ENCODE measurements at regions of chr7 and their contacts with region 1.

Region 1: GRCh38 chr7:85041605-85042216 is 145.1 kb downstream of the SEMA3D start:
- H3K4me3 Mint-ChIP-seq: no peak overlapping the region
- H3K27ac Mint-ChIP-seq: no peak overlapping the region
- H3K4me1 Mint-ChIP-seq: no peaks in the 10 kb centered on the region
- H3K27me3 Mint-ChIP-seq: no peaks in the 10 kb centered on the region

Region 2: DNA sequence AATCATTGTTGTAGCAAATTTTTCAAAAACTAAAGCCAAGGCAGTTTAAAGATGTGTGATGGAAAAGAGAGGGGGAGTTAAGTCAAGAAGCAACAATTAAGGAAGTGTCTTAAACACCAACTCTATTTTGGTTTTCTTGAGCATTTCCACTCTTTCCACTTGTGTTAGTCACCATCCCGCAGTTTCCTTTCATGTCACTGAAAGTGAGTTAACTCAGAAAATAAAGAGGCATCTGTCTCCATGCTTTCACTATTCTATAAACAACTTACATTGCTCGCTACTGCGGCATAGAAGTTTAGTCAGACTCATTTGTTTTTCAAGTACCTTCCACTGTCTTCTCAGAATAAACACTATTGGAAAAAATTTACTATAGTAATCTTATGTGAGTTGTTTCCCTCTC is 430.0 kb after region 1 on chr7:
- intact Hi-C with region 1: loop called (anchors 10 kb)
- H3K4me3 Mint-ChIP-seq: no peak overlapping the region
- H3K27ac Mint-ChIP-seq: no peak overlapping the region
- H3K4me1 Mint-ChIP-seq: peaks cover 16% of the 10 kb centered on the region
- H3K27me3 Mint-ChIP-seq: no peaks in the 10 kb centered on the region

Region 3: DNA sequence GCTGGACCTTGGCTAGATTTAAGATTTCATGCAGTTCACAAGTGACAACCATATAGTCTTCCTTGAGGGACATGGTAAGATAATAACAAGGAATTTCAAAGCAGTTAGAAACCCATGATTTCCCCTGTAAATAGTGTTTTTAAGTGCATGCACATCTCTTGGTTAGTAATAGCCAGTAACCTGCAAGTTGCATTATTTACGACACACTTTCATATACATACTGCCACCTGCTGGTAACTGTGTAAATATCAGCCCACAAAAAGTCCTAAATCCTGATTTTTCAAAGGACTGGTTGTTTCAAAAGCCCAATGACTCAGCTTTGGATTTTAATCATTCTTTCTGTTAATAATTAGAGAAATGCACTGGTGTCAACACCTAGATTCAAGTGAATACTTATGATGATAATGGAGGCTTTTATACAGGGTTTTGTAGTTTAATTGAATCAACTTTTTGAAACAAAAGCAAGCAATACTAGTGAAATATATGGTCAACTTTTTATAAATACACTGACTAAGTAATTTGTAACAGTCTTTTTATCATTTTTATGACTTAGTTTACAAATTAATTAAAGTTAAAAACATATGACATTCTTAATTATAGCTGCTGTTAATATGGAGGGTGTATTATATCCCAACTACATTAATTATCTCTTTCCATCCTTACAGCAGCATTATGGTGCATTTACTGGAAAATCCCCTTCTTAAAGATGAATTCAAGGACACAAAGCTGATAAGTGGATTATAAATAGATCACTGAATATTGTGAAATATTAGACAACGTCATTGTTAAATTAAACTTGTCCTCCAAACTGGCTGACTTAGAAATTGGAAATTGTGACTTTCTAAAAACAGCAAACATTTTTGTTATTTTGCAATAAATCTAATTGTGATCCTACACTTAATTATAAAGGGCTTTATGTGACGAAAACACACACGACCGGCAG is 512.8 kb after region 1 on chr7:
- intact Hi-C with region 1: loop called (anchors 2 kb)
- H3K4me3 Mint-ChIP-seq: no peak overlapping the region
- H3K27ac Mint-ChIP-seq: no peak overlapping the region
- H3K4me1 Mint-ChIP-seq: peaks cover 7% of the 10 kb centered on the region
- H3K27me3 Mint-ChIP-seq: no peaks in the 10 kb centered on the region

Region 4: GRCh38 chr7:85750454-85750949 is 708.8 kb after region 1 on chr7:
- intact Hi-C with region 1: loop called (anchors 1 kb)
- H3K4me3 Mint-ChIP-seq: no peak overlapping the region
- H3K27ac Mint-ChIP-seq: no peak overlapping the region
- H3K4me1 Mint-ChIP-seq: no peaks in the 10 kb centered on the region
- H3K27me3 Mint-ChIP-seq: no peaks in the 10 kb centered on the region

Region 5: GRCh38 chr7:85829817-85830432 is 788.2 kb after region 1 on chr7:
- intact Hi-C with region 1: loop called (anchors 5 kb)
- H3K4me3 Mint-ChIP-seq: no peak overlapping the region
- H3K27ac Mint-ChIP-seq: no peak overlapping the region
- H3K4me1 Mint-ChIP-seq: no peaks in the 10 kb centered on the region
- H3K27me3 Mint-ChIP-seq: no peaks in the 10 kb centered on the region

Region 6: DNA sequence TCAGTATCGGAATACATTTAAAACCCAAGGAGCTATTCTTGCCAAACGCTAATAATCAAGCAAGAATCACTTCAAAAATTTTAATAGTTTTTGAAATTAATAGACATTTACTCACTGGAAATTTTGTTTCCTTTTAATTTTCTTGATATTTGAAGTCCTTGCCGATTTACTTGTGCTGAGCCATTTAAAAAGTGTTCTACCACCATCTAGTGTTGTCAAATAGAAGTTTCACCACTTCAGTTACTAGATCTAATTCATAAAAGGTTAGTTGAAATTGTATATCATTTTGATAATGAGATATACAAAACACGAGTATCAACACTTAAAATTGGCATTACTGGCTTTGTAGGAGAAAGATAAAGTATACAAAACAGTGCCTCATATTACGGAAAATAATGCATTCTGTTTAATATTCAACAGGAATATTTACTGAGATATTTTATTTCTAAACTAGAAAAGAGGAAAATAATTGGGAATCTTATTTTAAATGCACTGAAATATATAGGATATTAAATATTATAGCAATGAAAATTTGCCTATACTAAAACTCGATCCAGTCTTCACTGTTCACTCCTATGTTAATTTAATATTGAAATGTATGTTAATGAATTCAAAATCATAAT is 810.0 kb after region 1 on chr7:
- intact Hi-C with region 1: loop called (anchors 5 kb)
- H3K4me3 Mint-ChIP-seq: no peak overlapping the region
- H3K27ac Mint-ChIP-seq: no peak overlapping the region
- H3K4me1 Mint-ChIP-seq: no peaks in the 10 kb centered on the region
- H3K27me3 Mint-ChIP-seq: no peaks in the 10 kb centered on the region

Region 7: DNA sequence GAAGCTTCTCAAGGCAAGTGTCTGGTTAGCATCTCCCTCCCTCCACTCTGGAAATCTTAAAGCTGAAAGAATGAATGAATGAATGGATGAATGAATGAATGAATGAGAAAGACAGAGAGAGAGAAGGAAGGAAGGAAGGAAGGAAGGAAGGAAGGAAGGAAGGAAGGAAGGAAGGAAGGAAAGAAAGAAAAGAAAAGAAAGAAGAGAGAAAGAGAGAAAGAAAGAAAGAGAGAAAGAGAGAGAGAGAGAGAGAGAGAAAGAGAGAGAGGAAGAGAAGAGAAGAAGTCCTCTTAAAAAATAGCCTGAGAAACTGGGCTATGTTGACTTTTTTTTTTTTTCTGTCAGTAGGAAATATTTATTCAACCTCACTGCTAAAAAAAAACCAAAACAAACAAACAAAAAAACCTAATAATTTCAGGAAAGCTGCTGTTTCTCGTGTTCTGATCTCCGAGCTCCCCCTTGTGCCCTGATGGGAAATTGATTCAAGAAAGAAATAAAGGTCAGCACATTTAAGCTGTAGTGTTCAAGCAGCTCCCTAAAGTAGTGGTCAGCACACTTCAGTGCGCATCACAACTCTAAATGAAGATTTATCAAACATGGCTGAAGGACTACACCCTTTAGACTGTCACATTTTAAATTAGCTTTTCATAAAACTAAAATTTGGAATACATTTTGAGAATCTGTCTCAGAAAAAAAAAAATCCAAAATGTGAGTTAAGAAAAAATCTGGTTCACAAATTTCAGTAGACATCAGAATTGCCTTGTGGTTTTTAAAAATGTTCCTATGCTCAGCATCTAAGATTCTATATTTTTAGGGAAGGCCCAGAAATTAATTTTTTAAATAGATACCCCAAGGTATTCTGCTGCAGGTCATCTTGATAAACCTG is 1863.5 kb after region 1 on chr7:
- intact Hi-C with region 1: loop called (anchors 10 kb)
- H3K4me3 Mint-ChIP-seq: no peak overlapping the region
- H3K27ac Mint-ChIP-seq: no peak overlapping the region
- H3K4me1 Mint-ChIP-seq: no peaks in the 10 kb centered on the region
- H3K27me3 Mint-ChIP-seq: no peaks in the 10 kb centered on the region

Measured in dendritic cell treated with granulocyte-macrophage colony-stimulating factor and Interleukin-4, amounts not matched to agents 40 ng/mL and 50 ng/mL, for 4 days (primary cell).